Aorta (tissue), 5 donors: ENCODE measurements at regions of chr14 and their contacts with region 1.

Region 1: GRCh38 chr14:51547260-51547659 is 104.5 kb upstream of the FRMD6 start:
- DNase-seq: peak in 1 of 2 donors; percentile 62
- ATAC-seq: peak; percentile 88
- H3K4me3 ChIP-seq: no peak overlapping the region
- H3K27ac ChIP-seq: peak overlapping the region in 1 of 2 donors; percentile 43
- H3K4me1 ChIP-seq: peaks cover 0 to 2% of the 10 kb centered on the region in 2 donors
- H3K27me3 ChIP-seq: no peaks in the 10 kb centered on the region

Region 2: DNA sequence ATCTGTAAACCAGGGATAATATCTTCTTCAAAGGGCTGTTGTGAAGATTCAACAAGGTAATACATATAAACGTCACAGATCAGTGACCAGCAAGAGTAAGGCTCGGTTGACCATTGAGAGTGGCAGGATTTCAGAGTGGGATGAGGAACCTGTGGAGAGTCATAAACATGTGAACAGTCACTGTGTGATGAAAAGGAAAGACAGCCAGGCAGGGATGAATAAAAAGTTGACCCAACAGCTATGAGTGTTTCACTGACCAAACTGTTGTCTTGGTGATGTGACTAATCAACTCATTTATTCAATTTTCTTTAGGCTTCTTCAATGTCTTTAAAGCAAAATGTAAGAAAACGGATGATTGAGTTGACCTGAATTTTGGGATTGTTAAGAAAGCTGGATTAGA is 95.9 kb after region 1 on chr14:
- intact Hi-C with region 1: loop called in 1 of 2 experiments (anchors 5 kb)
- DNase-seq: no peak
- ATAC-seq: no peak
- H3K4me3 ChIP-seq: no peak overlapping the region
- H3K27ac ChIP-seq: no peak overlapping the region
- H3K4me1 ChIP-seq: peaks cover 0 to 4% of the 10 kb centered on the region in 2 donors
- H3K27me3 ChIP-seq: no peaks in the 10 kb centered on the region

Region 3: DNA sequence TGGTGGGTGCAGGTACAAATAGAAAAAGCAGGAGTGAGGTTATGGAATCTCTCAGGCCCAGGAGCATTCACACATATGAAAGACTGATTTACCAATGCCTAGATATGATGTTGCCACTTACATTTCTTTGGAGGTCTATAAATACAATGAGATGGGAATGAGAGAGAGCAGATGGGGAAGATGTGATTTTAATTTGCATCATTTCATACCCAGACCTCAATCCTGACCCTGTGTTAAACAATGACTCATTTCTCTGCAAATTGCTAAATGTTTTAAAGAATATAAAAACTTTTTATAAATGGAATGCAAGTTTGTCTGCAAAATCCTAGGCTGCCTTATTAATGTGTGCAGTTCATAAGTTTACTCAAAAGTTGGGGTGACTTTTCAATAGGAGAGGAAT is 274.6 kb after region 1 on chr14:
- intact Hi-C with region 1: no loop called
- DNase-seq: no peak
- ATAC-seq: no peak
- H3K4me3 ChIP-seq: no peak overlapping the region
- H3K27ac ChIP-seq: no peak overlapping the region
- H3K4me1 ChIP-seq: no peaks in the 10 kb centered on the region
- H3K27me3 ChIP-seq: peaks cover 0 to 2% of the 10 kb centered on the region in 2 donors